B cell (primary cell): ENCODE measurements at regions of chr6 and their contacts with region 1.

Region 1: DNA sequence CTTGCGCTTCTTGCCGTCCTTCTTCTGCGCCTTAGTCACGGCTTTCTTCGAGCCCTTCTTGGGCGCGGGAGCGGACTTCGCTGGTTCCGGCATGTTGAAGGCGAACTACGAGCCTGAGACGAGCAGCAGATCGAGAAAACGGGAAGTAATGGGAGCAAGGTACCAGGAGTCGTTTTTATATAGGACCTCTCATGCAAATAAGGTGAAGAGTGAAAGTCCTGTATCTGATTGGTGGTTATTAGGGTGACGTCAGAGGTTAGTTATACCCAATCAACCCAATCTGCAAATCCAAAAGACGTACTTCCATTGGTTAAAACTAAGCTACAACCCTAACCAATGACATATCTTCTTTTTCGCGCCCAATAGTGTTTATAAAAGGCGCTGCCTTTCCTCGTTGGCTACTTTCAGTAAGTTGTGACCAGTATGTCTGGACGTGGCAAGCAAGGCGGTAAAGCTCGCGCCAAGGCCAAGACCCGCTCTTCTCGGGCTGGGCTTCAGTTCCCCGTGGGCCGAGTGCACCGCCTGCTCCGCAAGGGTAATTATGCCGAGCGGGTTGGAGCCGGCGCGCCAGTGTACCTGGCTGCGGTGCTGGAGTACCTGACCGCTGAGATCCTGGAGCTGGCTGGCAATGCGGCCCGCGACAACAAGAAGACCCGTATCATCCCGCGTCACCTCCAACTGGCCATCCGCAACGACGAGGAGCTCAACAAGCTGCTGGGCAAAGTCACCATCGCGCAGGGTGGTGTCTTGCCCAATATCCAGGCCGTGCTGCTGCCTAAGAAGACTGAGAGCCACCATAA is 100.6 kb upstream of the PRSS16 start:
- DNase-seq: peak; percentile 98
- ATAC-seq: peak; percentile 85
- H3K4me3 ChIP-seq: peak overlapping the region; percentile 72 to 100 (median 88)
- H3K4me3 Mint-ChIP-seq: no peak overlapping the region
- H3K27ac ChIP-seq: peak overlapping the region; percentile 76 to 92
- H3K27ac Mint-ChIP-seq: no peak overlapping the region
- H3K4me1 ChIP-seq: peaks cover 20 to 26% of the 10 kb centered on the region in 2 donors
- H3K4me1 Mint-ChIP-seq: peaks cover 17% of the 10 kb centered on the region
- H3K27me3 ChIP-seq: no peaks in the 10 kb centered on the region
- H3K27me3 Mint-ChIP-seq: no peaks in the 10 kb centered on the region
- CTCF ChIP-seq: no peak

Region 2: GRCh38 chr6:26025894-26026832 is 1120.7 kb before region 1 on chr6:
- CTCF ChIA-PET with region 1: no interaction called
- POLR2A ChIA-PET with region 1: interaction called, 13 read pairs
- intact Hi-C with region 1: loop called (anchors 2 kb)
- DNase-seq: peak; percentile 97
- ATAC-seq: peak; percentile 35
- H3K4me3 ChIP-seq: peak overlapping the region; percentile 58 to 99 (median 88)
- H3K4me3 Mint-ChIP-seq: peak overlapping the region; percentile 98
- H3K27ac ChIP-seq: peak overlapping the region; percentile 88 to 97
- H3K27ac Mint-ChIP-seq: peak overlapping the region; percentile 98
- H3K4me1 ChIP-seq: peaks cover 23 to 32% of the 10 kb centered on the region in 2 donors
- H3K4me1 Mint-ChIP-seq: peaks cover 49% of the 10 kb centered on the region
- H3K27me3 ChIP-seq: no peaks in the 10 kb centered on the region
- H3K27me3 Mint-ChIP-seq: no peaks in the 10 kb centered on the region
- CTCF ChIP-seq: peak; percentile 92

Region 3: GRCh38 chr6:26141378-26141904 is 1005.5 kb before region 1 on chr6:
- CTCF ChIA-PET with region 1: no interaction called
- POLR2A ChIA-PET with region 1: interaction called, 10 read pairs
- intact Hi-C with region 1: no loop called
- DNase-seq: no peak
- ATAC-seq: no peak
- H3K4me3 ChIP-seq: no peak overlapping the region
- H3K4me3 Mint-ChIP-seq: no peak overlapping the region
- H3K27ac ChIP-seq: no peak overlapping the region
- H3K27ac Mint-ChIP-seq: no peak overlapping the region
- H3K4me1 ChIP-seq: no peaks in the 10 kb centered on the region
- H3K4me1 Mint-ChIP-seq: peaks cover 5% of the 10 kb centered on the region
- H3K27me3 ChIP-seq: no peaks in the 10 kb centered on the region
- H3K27me3 Mint-ChIP-seq: no peaks in the 10 kb centered on the region
- CTCF ChIP-seq: no peak

Region 4: DNA sequence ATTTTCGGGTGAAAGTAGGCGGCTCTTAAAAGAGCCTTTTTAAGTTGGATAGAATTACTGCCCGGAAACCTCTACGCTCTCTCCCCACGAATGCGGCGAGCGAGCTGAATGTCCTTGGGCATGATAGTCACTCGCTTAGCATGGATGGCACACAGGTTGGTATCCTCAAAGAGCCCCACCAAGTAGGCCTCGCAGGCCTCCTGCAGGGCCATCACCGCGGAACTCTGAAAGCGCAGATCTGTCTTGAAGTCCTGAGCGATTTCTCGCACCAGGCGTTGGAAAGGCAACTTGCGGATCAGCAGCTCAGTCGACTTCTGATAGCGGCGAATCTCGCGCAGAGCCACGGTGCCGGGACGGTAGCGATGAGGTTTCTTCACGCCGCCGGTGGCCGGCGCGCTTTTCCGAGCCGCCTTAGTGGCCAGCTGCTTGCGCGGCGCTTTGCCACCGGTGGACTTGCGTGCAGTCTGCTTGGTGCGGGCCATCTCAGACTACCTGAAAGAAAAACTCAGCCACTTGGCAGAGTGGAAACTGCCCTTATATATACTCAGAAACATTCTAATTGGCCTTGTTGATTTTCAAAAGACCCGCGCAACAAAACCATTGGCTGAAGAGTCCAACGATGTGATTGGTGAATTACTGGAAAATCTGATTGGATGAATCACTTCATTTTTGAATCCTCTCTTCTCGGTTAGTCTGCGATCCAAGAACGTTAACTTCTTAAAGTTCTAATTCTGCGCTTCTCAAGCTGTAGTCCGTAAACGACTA is 875.8 kb before region 1 on chr6:
- CTCF ChIA-PET with region 1: interaction called, 3 read pairs
- POLR2A ChIA-PET with region 1: interaction called, 23 read pairs
- intact Hi-C with region 1: loop called (anchors 2 kb)
- DNase-seq: peak; percentile 90
- ATAC-seq: peak; percentile 19
- H3K4me3 ChIP-seq: peak overlapping the region; percentile 63 to 88 (median 75)
- H3K4me3 Mint-ChIP-seq: no peak overlapping the region
- H3K27ac ChIP-seq: peak overlapping the region; percentile 79 to 86
- H3K27ac Mint-ChIP-seq: no peak overlapping the region
- H3K4me1 ChIP-seq: peaks cover 15 to 37% of the 10 kb centered on the region in 2 donors
- H3K4me1 Mint-ChIP-seq: peaks cover 20% of the 10 kb centered on the region
- H3K27me3 ChIP-seq: no peaks in the 10 kb centered on the region
- H3K27me3 Mint-ChIP-seq: no peaks in the 10 kb centered on the region
- CTCF ChIP-seq: no peak

Region 5: DNA sequence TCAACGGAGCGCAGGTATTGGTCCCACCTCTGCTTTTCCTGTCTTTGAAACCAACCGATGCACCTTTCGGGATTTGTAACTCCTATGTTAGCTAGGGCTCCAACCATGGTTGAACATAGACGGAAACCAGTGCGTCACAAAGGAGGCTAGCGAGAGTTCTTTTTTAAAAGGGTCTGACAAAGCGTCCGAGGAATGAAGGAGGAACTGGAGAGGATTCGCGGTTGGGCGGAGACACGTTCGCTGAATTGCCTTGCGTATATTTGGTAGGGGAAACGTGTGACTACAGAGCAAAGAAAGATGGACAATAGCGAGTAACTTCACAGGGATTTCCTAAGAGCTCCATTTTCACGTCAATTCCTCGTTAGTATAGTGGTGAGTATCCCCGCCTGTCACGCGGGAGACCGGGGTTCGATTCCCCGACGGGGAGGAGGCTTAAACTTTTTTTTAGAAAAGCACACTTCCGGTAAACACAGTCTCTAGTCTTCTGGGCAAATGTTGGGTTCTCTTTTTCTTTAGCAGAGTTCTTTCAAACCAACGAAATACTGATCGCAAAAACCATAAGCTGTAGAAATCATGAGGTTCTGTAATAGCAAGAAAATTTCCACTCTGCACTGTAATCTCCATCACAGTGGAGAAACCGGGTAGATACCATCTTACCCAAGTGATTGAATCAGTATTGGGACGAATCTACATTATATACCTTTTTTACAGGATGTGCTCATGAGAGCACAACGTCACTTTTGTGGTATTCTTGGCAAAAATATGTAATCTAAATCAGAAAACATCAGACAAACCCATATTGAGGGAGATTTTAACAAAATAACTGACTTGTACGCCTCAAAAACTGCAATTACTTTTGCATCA is 332.6 kb after region 1 on chr6:
- CTCF ChIA-PET with region 1: interaction called, 3 read pairs
- POLR2A ChIA-PET with region 1: interaction called, 6 read pairs
- intact Hi-C with region 1: loop called (anchors 2 kb)
- DNase-seq: peak; percentile 96
- ATAC-seq: peak; percentile 77
- H3K4me3 ChIP-seq: peak overlapping the region; percentile 88 to 97 (median 95)
- H3K4me3 Mint-ChIP-seq: no peak overlapping the region
- H3K27ac ChIP-seq: peak overlapping the region; percentile 98
- H3K27ac Mint-ChIP-seq: no peak overlapping the region
- H3K4me1 ChIP-seq: peaks cover 15 to 17% of the 10 kb centered on the region in 2 donors
- H3K4me1 Mint-ChIP-seq: peaks cover 6% of the 10 kb centered on the region
- H3K27me3 ChIP-seq: no peaks in the 10 kb centered on the region
- H3K27me3 Mint-ChIP-seq: no peaks in the 10 kb centered on the region
- CTCF ChIP-seq: no peak

Region 6: DNA sequence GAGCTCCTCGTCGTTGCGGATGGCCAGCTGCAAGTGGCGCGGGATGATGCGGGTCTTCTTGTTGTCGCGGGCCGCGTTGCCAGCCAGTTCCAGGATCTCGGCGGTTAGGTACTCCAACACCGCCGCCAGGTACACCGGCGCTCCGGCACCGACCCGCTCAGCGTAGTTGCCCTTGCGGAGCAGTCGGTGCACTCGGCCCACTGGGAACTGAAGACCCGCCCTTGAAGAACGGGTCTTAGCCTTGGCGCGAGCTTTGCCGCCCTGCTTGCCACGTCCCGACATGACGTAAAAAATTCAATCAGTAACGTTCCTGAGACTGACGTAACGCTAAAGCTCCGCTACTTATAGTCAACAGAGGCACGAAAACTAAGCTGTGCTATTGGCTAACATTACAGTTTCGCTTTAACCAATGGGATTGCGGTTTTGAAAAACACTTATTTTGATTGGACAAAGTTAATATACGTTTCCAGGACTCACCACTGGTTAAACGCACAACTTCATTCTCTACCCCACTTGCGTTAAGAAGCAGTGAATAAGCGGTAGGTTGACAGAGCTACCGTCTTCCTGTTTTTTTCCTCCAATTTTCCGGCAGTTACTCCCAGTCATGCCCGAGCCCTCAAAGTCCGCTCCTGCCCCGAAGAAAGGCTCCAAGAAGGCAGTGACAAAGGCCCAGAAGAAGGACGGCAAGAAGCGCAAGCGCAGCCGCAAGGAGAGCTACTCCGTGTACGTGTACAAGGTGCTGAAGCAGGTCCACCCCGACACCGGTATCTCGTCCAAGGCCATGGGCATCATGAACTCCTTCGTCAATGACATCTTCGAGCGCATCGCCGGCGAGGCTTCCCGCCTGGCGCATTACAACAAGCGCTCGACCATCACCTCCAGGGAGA is 691.4 kb after region 1 on chr6:
- CTCF ChIA-PET with region 1: interaction called, 4 read pairs
- POLR2A ChIA-PET with region 1: interaction called, 29 read pairs
- intact Hi-C with region 1: loop called (anchors 1 kb)
- DNase-seq: peak; percentile 98
- ATAC-seq: peak; percentile 80
- H3K4me3 ChIP-seq: peak overlapping the region; percentile 82 to 99 (median 90)
- H3K4me3 Mint-ChIP-seq: no peak overlapping the region
- H3K27ac ChIP-seq: peak overlapping the region; percentile 94 to 96
- H3K27ac Mint-ChIP-seq: no peak overlapping the region
- H3K4me1 ChIP-seq: peaks cover 28 to 29% of the 10 kb centered on the region in 2 donors
- H3K4me1 Mint-ChIP-seq: peaks cover 18% of the 10 kb centered on the region
- H3K27me3 ChIP-seq: peaks cover 0 to 4% (median 0%) of the 10 kb centered on the region in 4 experiments
- H3K27me3 Mint-ChIP-seq: no peaks in the 10 kb centered on the region
- CTCF ChIP-seq: no peak

Region 7: GRCh38 chr6:27871924-27872638 is 725.2 kb after region 1 on chr6:
- CTCF ChIA-PET with region 1: interaction called, 3 read pairs
- POLR2A ChIA-PET with region 1: interaction called, 29 read pairs
- intact Hi-C with region 1: no loop called
- DNase-seq: peak; percentile 98
- ATAC-seq: peak; percentile 76
- H3K4me3 ChIP-seq: peak overlapping the region; percentile 66 to 99 (median 76)
- H3K4me3 Mint-ChIP-seq: peak overlapping the region; percentile 84
- H3K27ac ChIP-seq: peak overlapping the region; percentile 79 to 88
- H3K27ac Mint-ChIP-seq: peak overlapping the region; percentile 98
- H3K4me1 ChIP-seq: peaks cover 20 to 34% of the 10 kb centered on the region in 2 donors
- H3K4me1 Mint-ChIP-seq: peaks cover 30% of the 10 kb centered on the region
- H3K27me3 ChIP-seq: no peaks in the 10 kb centered on the region
- H3K27me3 Mint-ChIP-seq: no peaks in the 10 kb centered on the region
- CTCF ChIP-seq: peak; percentile 56